ENCODE measurements at regions of chr9 and their contacts with region 1.

Region 1: DNA sequence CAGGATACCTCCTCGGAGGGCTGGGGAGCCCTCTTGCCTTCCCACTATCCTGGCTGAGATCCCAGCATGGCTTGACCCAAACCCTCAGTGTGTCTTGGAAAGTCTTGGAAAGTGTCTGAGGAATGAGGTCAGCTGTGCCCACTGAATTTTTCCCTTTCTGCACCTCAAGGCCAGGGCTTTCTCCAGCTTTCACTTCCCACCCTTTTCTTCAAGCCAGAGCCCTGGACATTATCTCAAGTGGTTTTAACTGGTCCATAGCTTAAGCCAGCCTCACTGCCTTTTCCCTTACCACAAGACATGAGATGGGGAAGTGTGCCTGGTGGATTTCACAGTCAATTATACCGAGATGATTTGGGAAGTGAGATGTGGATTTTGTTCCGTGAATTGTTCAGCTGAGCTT is 35.7 kb upstream of the LHX2 start:
- DNase-seq: no peak
- ATAC-seq: no peak
- H3K4me3 ChIP-seq: no peak overlapping the region
- H3K4me3 Mint-ChIP-seq: no peak overlapping the region
- H3K27ac ChIP-seq: no peak overlapping the region
- H3K27ac Mint-ChIP-seq: no peak overlapping the region
- H3K4me1 ChIP-seq: no peaks in the 10 kb centered on the region
- H3K4me1 Mint-ChIP-seq: no peaks in the 10 kb centered on the region
- H3K27me3 ChIP-seq: peaks cover 0 to 23% (median 4%) of the 10 kb centered on the region in 4 experiments
- H3K27me3 Mint-ChIP-seq: peaks cover 10% of the 10 kb centered on the region
- CTCF ChIP-seq: no peak

Region 2: GRCh38 chr9:123997665-123998277 is 21.9 kb after region 1 on chr9:
- CTCF ChIA-PET with region 1: no interaction called
- POLR2A ChIA-PET with region 1: no interaction called
- intact Hi-C with region 1: loop called (anchors 2 kb)
- DNase-seq: peak; percentile 81
- ATAC-seq: peak; percentile 66
- H3K4me3 ChIP-seq: peak overlapping the region in 3 of 5 experiments; percentile 13 to 66 (median 22)
- H3K4me3 Mint-ChIP-seq: peak overlapping the region; percentile 86
- H3K27ac ChIP-seq: no peak overlapping the region
- H3K27ac Mint-ChIP-seq: peak overlapping the region; percentile 38
- H3K4me1 ChIP-seq: peaks cover 42 to 47% of the 10 kb centered on the region in 2 donors
- H3K4me1 Mint-ChIP-seq: peaks cover 42% of the 10 kb centered on the region
- H3K27me3 ChIP-seq: peaks cover 0 to 66% (median 43%) of the 10 kb centered on the region in 4 experiments
- H3K27me3 Mint-ChIP-seq: peaks cover 69% of the 10 kb centered on the region
- CTCF ChIP-seq: no peak

Measured in B cell (primary cell).